WTC11 (cell line): ENCODE measurements at regions of chr16 and their contacts with region 1.

Region 1: DNA sequence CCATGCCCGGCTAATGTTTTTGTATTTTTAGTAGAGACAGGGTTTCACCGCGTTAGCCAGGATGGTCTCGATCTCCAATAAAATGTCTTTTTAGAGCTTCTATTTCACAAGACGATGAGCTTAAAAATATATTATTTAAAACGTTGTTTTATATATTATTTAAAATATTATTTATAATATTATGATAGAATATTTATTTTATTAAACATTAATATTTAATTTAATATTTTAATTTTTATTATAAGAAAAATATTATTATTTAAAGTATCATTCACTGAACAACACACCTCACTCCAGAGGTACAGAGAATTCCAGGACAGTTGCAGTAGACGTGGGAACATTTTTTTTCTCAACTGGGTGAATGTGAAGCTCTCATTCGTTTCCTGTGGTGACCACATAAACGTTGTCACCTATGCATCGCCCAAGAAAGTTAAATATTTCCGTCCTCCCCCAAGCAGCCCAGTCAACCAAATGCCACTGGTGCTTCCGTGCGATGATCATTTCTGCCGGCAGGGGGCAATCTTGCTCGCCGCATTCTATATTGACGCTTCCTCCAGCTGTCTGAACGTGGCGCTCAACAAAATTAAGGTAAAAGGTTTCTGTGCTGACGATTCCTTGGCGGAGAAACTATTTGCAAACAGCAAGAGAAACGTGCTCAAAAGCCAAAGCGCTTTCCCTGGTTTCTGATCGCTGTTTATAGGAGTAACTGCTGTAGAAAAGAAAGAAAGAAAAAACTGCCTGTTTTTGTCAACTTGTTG is 41.7 kb upstream of the PRSS54 start:
- DNase-seq: peak; percentile 94
- ATAC-seq: peak; percentile 75
- H3K4me3 Mint-ChIP-seq: peak overlapping the region; percentile 31
- H3K27ac Mint-ChIP-seq: peak overlapping the region; percentile 83
- H3K4me1 Mint-ChIP-seq: peaks cover 30% of the 10 kb centered on the region
- H3K27me3 Mint-ChIP-seq: no peaks in the 10 kb centered on the region
- CTCF ChIP-seq: peak; percentile 73

Region 2: GRCh38 chr16:58317608-58318152 is 18.8 kb before region 1 on chr16:
- CTCF ChIA-PET with region 1: interaction called, 14 read pairs
- POLR2A ChIA-PET with region 1: no interaction called
- DNase-seq: no peak
- ATAC-seq: no peak
- H3K4me3 Mint-ChIP-seq: no peak overlapping the region
- H3K27ac Mint-ChIP-seq: no peak overlapping the region
- H3K4me1 Mint-ChIP-seq: peaks cover 8% of the 10 kb centered on the region; the same call in 1 of the 2 replicates
- H3K27me3 Mint-ChIP-seq: no peaks in the 10 kb centered on the region; the same call in 1 of the 2 replicates
- CTCF ChIP-seq: no peak

Region 3: GRCh38 chr16:58348986-58349385 is 12.5 kb after region 1 on chr16:
- CTCF ChIA-PET with region 1: interaction called, 16 read pairs
- POLR2A ChIA-PET with region 1: no interaction called
- DNase-seq: no peak
- ATAC-seq: no peak
- H3K4me3 Mint-ChIP-seq: no peak overlapping the region
- H3K27ac Mint-ChIP-seq: no peak overlapping the region
- H3K4me1 Mint-ChIP-seq: peaks cover 19% of the 10 kb centered on the region
- H3K27me3 Mint-ChIP-seq: peaks cover 49% of the 10 kb centered on the region
- CTCF ChIP-seq: no peak

Region 4: DNA sequence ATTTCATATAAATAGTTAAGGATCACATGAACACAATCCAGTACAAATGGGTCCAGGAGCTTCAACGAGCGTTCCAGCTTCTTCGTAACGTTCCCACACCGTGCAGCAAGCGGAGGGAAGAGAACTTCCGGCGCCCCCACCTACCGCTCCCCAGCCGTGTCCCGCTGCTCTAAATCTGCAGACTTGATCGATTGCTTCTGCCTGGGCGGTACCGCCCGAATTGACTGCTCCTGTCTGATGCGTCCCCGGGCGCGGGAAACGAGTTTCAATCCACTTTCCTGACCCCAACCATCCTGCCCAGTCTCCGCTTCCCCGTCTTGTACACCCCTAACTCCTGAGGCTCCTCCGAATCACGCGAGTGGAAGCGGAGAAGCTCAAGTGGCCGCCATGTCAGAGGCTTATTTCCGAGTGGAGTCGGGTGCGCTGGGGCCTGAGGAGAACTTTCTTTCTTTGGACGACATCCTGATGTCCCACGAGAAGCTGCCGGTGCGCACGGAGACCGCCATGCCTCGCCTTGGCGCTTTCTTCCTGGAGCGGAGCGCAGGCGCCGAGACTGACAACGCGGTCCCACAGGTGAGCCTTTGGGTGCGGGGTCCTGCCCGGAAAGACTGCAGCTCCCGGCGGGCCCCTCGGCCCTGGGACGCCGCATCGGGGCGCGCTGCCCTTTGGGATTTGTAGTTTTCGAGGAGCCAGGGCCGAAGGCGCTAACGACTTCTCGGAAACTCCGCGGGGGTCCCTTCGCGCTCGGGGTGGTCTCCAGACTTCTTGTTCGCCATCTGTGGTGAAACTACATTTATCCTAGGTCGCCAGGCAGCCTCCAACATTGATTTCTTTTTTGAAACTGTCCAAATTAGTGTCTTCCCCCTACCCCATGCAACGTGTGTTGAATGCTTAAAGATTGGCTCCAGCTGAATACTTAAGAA is 56.0 kb after region 1 on chr16 and contains the start of gene GINS3:
- CTCF ChIA-PET with region 1: interaction called, 20 read pairs
- POLR2A ChIA-PET with region 1: no interaction called
- DNase-seq: peak; percentile 88
- ATAC-seq: peak; percentile 97
- H3K4me3 Mint-ChIP-seq: peak within 1 kb of the TSS; percentile 93
- H3K27ac Mint-ChIP-seq: peak within 1 kb of the TSS; percentile 91
- H3K4me1 Mint-ChIP-seq: peaks cover 3% of the 10 kb centered on the region; the same call in 1 of the 2 replicates
- H3K27me3 Mint-ChIP-seq: peaks cover 38% of the 10 kb centered on the region
- CTCF ChIP-seq: no peak
- total RNA-seq, gene GINS3: 7.3 to 11.6 TPM (median 9.8 TPM) in 3 replicates

Region 5: GRCh38 chr16:58487566-58488351 is 151.2 kb after region 1 on chr16:
- CTCF ChIA-PET with region 1: interaction called, 122 read pairs
- POLR2A ChIA-PET with region 1: interaction called, 6 read pairs
- DNase-seq: peak; percentile 94
- ATAC-seq: peak; percentile 94
- H3K4me3 Mint-ChIP-seq: no peak overlapping the region
- H3K27ac Mint-ChIP-seq: no peak overlapping the region
- H3K4me1 Mint-ChIP-seq: peaks cover 5% of the 10 kb centered on the region
- H3K27me3 Mint-ChIP-seq: peaks cover 7% of the 10 kb centered on the region
- CTCF ChIP-seq: peak; percentile 95

Region 6: GRCh38 chr16:58494981-58495520 is 158.5 kb after region 1 on chr16:
- CTCF ChIA-PET with region 1: interaction called, 22 read pairs
- POLR2A ChIA-PET with region 1: interaction called, 3 read pairs
- DNase-seq: peak; percentile 83
- ATAC-seq: peak; percentile 60
- H3K4me3 Mint-ChIP-seq: 0 out of 2 replicates have a peak overlapping the region, but pooled peaks have one; percentile 22
- H3K27ac Mint-ChIP-seq: 0 out of 2 replicates have a peak overlapping the region, but pooled peaks have one; percentile 72
- H3K4me1 Mint-ChIP-seq: peaks cover 16% of the 10 kb centered on the region
- H3K27me3 Mint-ChIP-seq: peaks cover 37% of the 10 kb centered on the region
- CTCF ChIP-seq: no peak; the same call in 1 of the 2 replicates

Region 7: DNA sequence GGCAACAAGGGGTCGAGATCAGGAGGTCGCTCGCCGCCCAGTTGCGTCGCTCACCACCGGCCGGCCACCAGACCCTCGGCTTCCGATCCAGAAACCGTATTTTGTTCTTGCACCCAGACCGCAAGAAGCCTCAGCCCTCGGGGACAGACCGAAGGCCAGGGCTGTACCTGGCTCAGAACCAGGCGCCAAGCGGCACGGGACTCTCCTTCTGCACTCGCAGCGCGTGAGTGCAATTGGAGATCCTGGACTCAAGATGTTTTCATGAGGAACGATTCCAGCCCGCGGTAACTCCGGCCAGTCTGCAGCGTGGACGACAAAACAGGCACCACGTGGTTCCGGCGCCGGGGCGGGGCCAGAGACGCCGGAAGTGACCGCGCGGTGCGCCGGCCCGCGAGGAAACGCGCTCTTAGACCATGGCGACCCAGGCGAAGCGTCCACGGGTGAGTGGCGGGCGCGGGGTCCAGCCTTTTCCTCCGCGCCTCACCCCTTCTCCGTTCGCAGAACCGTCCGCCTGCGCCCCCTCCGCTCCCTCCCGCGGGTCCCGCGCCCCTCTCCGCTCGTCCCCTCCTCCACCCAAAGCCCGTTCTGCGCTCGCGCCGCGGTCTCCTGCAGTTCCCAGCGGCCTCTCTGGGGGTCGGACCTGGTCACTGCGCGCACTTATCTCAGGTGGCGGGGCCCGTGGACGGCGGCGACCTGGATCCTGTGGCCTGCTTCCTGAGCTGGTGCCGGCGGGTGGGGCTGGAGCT is 178.8 kb after region 1 on chr16 and contains the start of gene SETD6:
- CTCF ChIA-PET with region 1: interaction called, 11 read pairs
- POLR2A ChIA-PET with region 1: no interaction called
- DNase-seq: peak; percentile 84
- ATAC-seq: peak; percentile 60
- H3K4me3 Mint-ChIP-seq: peak within 1 kb of the TSS; percentile 88
- H3K27ac Mint-ChIP-seq: peak within 1 kb of the TSS; percentile 87
- H3K4me1 Mint-ChIP-seq: peaks cover 29% of the 10 kb centered on the region
- H3K27me3 Mint-ChIP-seq: no peaks in the 10 kb centered on the region
- CTCF ChIP-seq: no peak
- total RNA-seq, gene SETD6: 34.0 to 41.1 TPM (median 35.0 TPM) in 3 replicates